ENCODE measurements at regions of chr12 and their contacts with region 1.

Region 1: DNA sequence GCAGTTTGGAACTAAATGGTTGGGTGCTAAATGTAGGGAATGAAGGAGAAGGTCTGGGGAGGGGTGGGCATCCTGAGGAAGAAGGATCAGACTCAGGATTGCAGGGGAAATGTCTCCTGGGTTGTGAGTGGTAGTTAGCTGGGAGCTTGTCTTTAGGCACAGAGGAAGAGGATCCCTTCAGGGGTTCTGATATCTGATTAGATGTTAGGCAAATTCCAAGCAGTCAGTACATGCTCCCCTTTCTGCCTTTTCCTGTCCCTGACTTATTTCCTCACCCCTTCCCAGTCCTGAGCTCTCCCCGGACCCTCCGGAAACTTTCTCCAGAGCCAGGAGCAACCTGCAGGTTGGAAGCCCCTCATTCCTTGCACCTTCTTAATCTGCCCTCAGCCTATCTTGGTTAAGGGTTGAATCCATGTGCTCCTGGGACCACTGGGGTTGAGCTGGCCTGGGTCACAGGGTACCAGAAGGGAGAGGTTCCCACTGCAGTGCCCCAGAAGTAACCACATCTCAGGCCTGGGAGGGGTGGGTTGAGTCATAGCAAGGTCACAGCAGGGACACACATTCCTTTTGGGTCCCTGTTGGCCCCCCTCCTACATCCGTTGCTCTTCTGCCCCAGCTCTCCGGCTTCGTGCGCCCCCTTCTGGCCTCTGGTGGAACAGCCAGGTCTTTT is 1.6 kb downstream of the IGFBP6 start:
- DNase-seq: peak; percentile 80 to 97
- H3K4me3 ChIP-seq: peak overlapping the region; percentile 85 to 86
- H3K27ac ChIP-seq: peak overlapping the region; percentile 97
- H3K4me1 ChIP-seq: peaks cover 0 to 22% of the 10 kb centered on the region in 2 donors
- H3K27me3 ChIP-seq: no peaks in the 10 kb centered on the region
- CTCF ChIP-seq: peak; percentile 94 to 98 (median 96)

Region 2: DNA sequence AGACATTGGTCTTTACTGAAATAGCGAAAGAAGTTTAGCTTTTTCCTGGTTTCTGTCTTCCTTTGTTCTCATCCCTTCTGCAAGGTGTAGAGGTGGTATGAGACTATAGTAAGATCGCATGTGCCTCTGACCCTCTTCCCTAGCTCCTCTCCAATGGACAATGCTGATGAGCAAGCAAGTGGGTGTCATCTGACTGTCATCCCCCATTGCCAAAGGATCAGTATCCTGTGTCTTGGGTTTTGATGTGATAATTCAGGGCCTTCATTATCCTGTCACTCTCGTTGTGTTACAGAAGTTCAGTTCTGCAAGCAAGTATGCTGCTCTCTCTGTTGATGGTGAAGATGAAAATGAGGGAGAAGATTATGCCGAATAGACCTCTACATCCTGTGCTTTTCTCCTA is 59.3 kb before region 1 on chr12:
- intact Hi-C with region 1: loop called (anchors 2 kb)
- DNase-seq: no peak
- H3K4me3 ChIP-seq: no peak overlapping the region
- H3K27ac ChIP-seq: peak overlapping the region; percentile 84
- H3K4me1 ChIP-seq: peaks cover 13 to 22% of the 10 kb centered on the region in 2 donors
- H3K27me3 ChIP-seq: no peaks in the 10 kb centered on the region
- CTCF ChIP-seq: no peak

Region 3: GRCh38 chr12:53065975-53066931 is 32.9 kb before region 1 on chr12:
- intact Hi-C with region 1: loop called (anchors 1 kb)
- DNase-seq: peak in 1 of 2 donors; percentile 91
- H3K4me3 ChIP-seq: peak overlapping the region in 1 of 2 donors; percentile 28
- H3K27ac ChIP-seq: peak overlapping the region; percentile 83 to 95
- H3K4me1 ChIP-seq: peaks cover 27 to 64% of the 10 kb centered on the region in 2 donors
- H3K27me3 ChIP-seq: no peaks in the 10 kb centered on the region
- CTCF ChIP-seq: peak; percentile 85 to 95 (median 88)

Region 4: GRCh38 chr12:53079226-53080117 is 19.6 kb before region 1 on chr12 and contains the start of gene SPRYD3:
- intact Hi-C with region 1: loop called (anchors 1 kb)
- DNase-seq: peak; percentile 93 to 99
- H3K4me3 ChIP-seq: peak within 1 kb of the TSS; percentile 58 to 70
- H3K27ac ChIP-seq: peak within 1 kb of the TSS; percentile 87 to 97
- H3K4me1 ChIP-seq: peaks cover 6 to 7% of the 10 kb centered on the region in 2 donors
- H3K27me3 ChIP-seq: no peaks in the 10 kb centered on the region
- CTCF ChIP-seq: peak in 1 of 3 experiments; percentile 4
- total RNA-seq, gene SPRYD3: 48.6 TPM

Region 5: GRCh38 chr12:53166837-53167236 is 67.7 kb after region 1 on chr12:
- intact Hi-C with region 1: no loop called
- DNase-seq: no peak
- H3K4me3 ChIP-seq: no peak overlapping the region
- H3K27ac ChIP-seq: no peak overlapping the region
- H3K4me1 ChIP-seq: no peaks in the 10 kb centered on the region
- H3K27me3 ChIP-seq: no peaks in the 10 kb centered on the region
- CTCF ChIP-seq: no peak

Region 6: DNA sequence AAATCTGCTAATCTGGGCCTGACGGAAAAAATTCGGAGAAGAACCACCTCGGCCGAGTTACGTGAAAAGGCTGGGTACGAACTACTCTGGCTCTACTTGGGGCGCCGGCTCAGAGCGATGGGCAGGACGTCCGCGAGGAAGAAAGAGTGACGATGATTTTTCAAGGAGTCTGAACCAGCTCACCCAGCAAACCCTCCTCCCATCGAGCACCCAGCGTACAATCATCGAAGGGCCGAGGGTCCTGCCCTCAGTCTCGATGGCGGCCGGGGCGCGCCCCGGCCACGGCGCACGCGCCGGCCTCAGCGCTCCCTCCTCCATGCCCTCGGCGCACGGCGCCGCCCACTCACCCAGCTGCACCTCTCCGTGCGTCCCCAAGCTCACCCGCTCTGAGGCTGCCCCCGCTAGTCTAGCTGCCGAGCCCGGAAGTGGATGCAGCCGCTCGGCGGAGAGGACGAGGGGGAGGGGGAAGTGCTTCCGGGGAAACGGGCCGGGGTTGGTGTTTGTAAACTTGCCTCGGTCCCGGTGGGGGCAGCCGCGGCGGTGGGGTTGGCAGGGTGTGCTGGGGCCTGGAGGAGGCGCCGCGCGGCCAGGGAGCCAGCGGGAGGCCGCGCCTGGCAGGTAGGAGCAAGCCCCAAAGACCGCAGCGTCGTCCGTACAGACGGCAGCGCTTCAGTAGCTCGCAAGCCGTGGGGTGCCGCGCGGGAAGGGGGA is 81.3 kb after region 1 on chr12 and contains the starts of genes CSAD and ZNF740:
- intact Hi-C with region 1: loop called (anchors 2 kb)
- DNase-seq: peak; percentile 92 to 99
- H3K4me3 ChIP-seq: peak within 1 kb of the TSS; percentile 91 to 96
- H3K27ac ChIP-seq: peak within 1 kb of the TSS; percentile 91 to 92
- H3K4me1 ChIP-seq: peaks cover 7 to 41% of the 10 kb centered on the region in 2 donors
- H3K27me3 ChIP-seq: no peaks in the 10 kb centered on the region
- CTCF ChIP-seq: no peak
- total RNA-seq, gene CSAD: 30.7 TPM
- total RNA-seq, gene ZNF740: 5.9 TPM